ENCODE measurements at regions of chr1 and their contacts with region 1.

Region 1: DNA sequence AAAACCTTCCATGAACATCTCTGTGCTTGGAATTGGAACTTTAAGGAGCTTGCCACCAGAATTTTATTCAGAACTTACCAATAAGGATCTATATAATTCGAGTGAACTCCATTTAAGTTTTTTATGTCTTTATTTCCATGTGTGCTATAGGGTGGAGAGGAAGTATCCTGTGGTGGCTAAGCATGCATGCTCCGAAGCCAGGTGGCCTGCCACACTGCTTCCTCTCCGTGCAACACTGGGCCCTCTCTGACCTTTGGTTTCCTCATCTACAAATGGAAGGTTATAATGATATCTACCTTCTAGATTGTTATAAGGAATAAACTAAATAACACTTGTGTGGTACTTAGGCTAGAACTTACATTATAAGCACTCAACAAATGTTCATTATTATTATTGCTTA is 382.1 kb downstream of the PTPRC start:
- DNase-seq: no peak
- ATAC-seq: peak; percentile 73
- H3K4me3 Mint-ChIP-seq: peak overlapping the region; percentile 28
- H3K27ac Mint-ChIP-seq: peak overlapping the region; percentile 30
- H3K4me1 Mint-ChIP-seq: peaks cover 10% of the 10 kb centered on the region
- H3K27me3 Mint-ChIP-seq: no peaks in the 10 kb centered on the region
- CTCF ChIP-seq: no peak

Region 2: GRCh38 chr1:199009447-199009846 is 11.5 kb before region 1 on chr1:
- CTCF ChIA-PET with region 1: no interaction called
- POLR2A ChIA-PET with region 1: interaction called, 3 read pairs
- intact Hi-C with region 1: loop called (anchors 1 kb)
- DNase-seq: no peak
- ATAC-seq: no peak
- H3K4me3 Mint-ChIP-seq: peak overlapping the region; percentile 59
- H3K27ac Mint-ChIP-seq: peak overlapping the region; percentile 59
- H3K4me1 Mint-ChIP-seq: peaks cover 28% of the 10 kb centered on the region
- H3K27me3 Mint-ChIP-seq: no peaks in the 10 kb centered on the region
- CTCF ChIP-seq: no peak

Measured in activated B cell treated with CpG ODN at 0.5 μM for 24 hours (primary cell).